ENCODE measurements at regions of chr2 and their contacts with region 1.

Region 1: DNA sequence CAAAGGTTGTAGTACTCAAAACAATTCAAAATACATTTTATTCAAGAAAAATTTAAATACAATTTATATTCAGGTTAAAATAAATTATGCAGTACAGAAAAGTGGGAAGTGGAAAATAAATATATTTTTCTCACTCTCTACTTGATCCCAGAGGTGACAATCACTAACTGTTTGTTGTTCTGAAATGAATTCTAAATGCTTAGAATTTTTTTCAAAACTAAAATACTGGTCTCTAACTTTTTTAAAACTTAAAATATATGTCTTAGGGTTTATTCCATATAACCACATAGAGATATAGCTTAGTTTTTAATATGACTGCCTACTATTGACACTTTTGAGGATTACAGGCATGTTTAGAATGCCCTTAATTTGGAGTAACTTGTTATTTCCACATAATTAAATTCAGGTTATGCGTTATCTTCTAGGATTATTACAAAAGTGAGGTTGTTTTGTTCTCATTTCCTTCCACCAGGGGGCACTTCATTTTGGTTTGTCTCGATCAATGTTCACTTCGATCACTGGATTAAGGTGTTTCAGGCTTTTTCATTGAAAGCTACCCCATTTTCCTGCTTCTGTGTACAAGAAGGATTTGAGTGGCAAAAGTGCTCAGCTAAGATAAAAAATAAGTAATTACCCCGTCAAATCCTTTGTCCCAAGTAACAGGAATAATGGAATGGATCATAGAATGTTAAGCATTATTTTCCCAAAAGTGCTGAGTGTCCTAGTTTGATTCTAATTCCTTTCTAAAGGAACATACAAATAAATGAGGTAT is 27.1 kb upstream of the TFPI start:
- DNase-seq: no peak
- ATAC-seq: no peak
- H3K4me3 Mint-ChIP-seq: no peak overlapping the region
- H3K27ac Mint-ChIP-seq: no peak overlapping the region
- H3K4me1 Mint-ChIP-seq: peaks cover 6% of the 10 kb centered on the region
- H3K27me3 Mint-ChIP-seq: no peaks in the 10 kb centered on the region

Region 2: DNA sequence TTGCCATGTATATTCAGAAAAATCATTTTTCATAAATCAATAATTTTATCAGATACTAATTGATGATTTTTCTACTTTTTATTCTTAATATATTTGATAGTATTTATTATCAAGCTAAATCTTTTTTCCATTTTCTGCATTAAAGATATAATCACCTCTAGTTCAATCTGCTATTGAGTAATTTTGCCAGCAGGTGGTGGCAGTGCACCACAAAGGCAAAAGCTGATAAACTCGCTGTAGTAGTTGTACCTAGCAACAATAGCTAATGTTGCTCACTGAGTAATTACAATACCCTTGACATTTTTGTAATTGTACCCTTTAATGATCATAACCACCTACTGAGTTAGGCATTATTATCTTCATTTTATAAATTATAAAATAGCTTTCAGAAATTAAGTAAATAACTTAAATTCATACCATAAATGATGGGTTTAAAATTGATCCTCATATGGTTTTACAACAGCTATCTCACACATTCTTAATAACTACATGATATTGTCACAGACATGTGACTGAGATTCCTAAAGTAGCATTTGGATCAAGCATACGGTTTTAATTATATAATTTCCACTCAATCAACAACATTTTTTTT is 81.3 kb before region 1 on chr2:
- CTCF ChIA-PET with region 1: interaction called, 18 read pairs
- DNase-seq: peak; percentile 54
- ATAC-seq: no peak
- H3K4me3 Mint-ChIP-seq: no peak overlapping the region
- H3K27ac Mint-ChIP-seq: no peak overlapping the region
- H3K4me1 Mint-ChIP-seq: no peaks in the 10 kb centered on the region
- H3K27me3 Mint-ChIP-seq: no peaks in the 10 kb centered on the region

Region 3: GRCh38 chr2:187627153-187627552 is 45.8 kb after region 1 on chr2:
- CTCF ChIA-PET with region 1: no interaction called
- DNase-seq: no peak
- ATAC-seq: no peak
- H3K4me3 Mint-ChIP-seq: no peak overlapping the region
- H3K27ac Mint-ChIP-seq: no peak overlapping the region
- H3K4me1 Mint-ChIP-seq: no peaks in the 10 kb centered on the region
- H3K27me3 Mint-ChIP-seq: no peaks in the 10 kb centered on the region

Region 4: DNA sequence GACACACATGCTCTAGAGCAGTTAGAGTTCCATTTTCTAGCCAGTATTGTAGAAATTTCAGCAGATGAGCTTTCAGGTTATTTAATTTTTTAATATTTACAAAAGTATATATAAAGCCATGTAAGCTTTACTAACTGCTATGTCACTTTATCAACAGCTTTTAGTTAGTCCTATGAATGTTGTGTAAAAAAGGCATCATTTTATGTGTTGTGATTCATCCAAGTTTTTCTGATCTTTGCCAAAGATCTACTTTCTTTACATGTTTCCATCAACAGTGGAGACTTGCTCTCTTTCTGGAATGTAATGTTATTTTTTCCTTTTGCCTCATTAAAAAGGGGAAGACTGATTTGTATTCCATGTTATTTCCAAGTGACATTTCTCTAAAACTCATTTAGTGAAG is 98.1 kb after region 1 on chr2:
- CTCF ChIA-PET with region 1: no interaction called
- DNase-seq: no peak
- ATAC-seq: no peak
- H3K4me3 Mint-ChIP-seq: no peak overlapping the region
- H3K27ac Mint-ChIP-seq: no peak overlapping the region
- H3K4me1 Mint-ChIP-seq: no peaks in the 10 kb centered on the region
- H3K27me3 Mint-ChIP-seq: no peaks in the 10 kb centered on the region